ENCODE measurements at regions of chr4 and their contacts with region 1.

Region 1: DNA sequence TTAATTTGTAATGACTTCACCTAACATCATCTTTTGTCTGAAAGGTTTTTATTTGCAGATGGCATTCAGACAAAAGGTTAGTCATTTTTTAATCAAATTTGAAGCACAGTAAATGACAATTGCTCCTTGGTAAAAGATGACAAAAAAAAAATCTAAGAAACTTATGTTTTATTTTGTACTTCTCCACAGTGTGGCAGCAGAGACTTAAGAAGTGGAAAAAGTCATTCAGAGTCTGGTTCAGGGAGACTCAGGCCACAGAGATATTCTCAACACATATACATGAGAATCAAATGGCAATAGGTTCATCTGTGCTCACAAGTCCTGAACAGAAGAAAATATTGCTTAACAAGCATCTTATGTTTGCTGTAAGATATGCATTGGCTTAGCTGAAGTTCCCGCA is 436.2 kb downstream of the KCNIP4 start:
- DNase-seq: no peak
- ATAC-seq: no peak

Region 2: GRCh38 chr4:21155367-21155766 is 357.0 kb before region 1 on chr4:
- intact Hi-C with region 1: no loop called
- DNase-seq: no peak
- ATAC-seq: no peak

Region 3: GRCh38 chr4:21765810-21766407 is 253.6 kb after region 1 on chr4:
- intact Hi-C with region 1: loop called (anchors 2 kb)
- DNase-seq: no peak
- ATAC-seq: peak; percentile 39

Region 4: DNA sequence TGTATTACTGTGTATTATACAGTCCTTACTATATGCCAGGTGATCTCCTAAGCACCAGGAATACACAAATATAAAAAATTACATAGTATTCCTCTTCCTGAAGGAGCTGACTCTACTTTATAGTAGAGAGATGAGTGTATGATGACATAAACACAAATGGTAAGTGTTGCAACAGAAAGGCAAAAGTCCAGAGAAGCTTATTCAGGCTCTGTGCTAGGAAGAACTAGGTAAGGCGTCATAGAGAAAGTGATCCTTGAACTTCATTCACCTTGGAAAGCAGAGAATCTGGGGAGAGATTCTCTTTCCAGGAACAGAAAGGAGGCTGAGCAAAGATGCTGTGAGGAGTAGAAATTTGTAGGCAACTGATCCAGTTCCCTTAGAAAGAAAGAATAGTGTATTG is 551.3 kb after region 1 on chr4:
- intact Hi-C with region 1: no loop called
- DNase-seq: no peak
- ATAC-seq: no peak

Measured in Right ventricle myocardium inferior (tissue), 1 donor.